ENCODE measurements at regions of chr13 and their contacts with region 1.

Region 1: GRCh38 chr13:40445557-40445990 is 220.9 kb downstream of the FOXO1 start:
- DNase-seq: peak in 1 of 2 experiments; percentile 67
- H3K4me3 ChIP-seq: no peak overlapping the region
- H3K27ac ChIP-seq: no peak overlapping the region
- H3K4me1 ChIP-seq: peaks cover 11% of the 10 kb centered on the region
- H3K27me3 ChIP-seq: no peaks in the 10 kb centered on the region
- CTCF ChIP-seq: no peak

Region 2: GRCh38 chr13:40271931-40272775 is 173.4 kb before region 1 on chr13:
- CTCF ChIA-PET with region 1: no interaction called
- POLR2A ChIA-PET with region 1: no interaction called
- intact Hi-C with region 1: loop called (anchors 2 kb)
- DNase-seq: peak; percentile 74 to 82
- H3K4me3 ChIP-seq: no peak overlapping the region
- H3K27ac ChIP-seq: peak overlapping the region; percentile 57
- H3K4me1 ChIP-seq: peaks cover 27% of the 10 kb centered on the region
- H3K27me3 ChIP-seq: no peaks in the 10 kb centered on the region
- CTCF ChIP-seq: no peak

Region 3: GRCh38 chr13:40344270-40345148 is 101.1 kb before region 1 on chr13:
- CTCF ChIA-PET with region 1: no interaction called
- POLR2A ChIA-PET with region 1: no interaction called
- intact Hi-C with region 1: loop called (anchors 5 kb)
- DNase-seq: no peak
- H3K4me3 ChIP-seq: no peak overlapping the region
- H3K27ac ChIP-seq: no peak overlapping the region
- H3K4me1 ChIP-seq: no peaks in the 10 kb centered on the region
- H3K27me3 ChIP-seq: no peaks in the 10 kb centered on the region
- CTCF ChIP-seq: no peak

Region 4: GRCh38 chr13:40401911-40402776 is 43.4 kb before region 1 on chr13:
- CTCF ChIA-PET with region 1: no interaction called
- POLR2A ChIA-PET with region 1: interaction called, 11 read pairs
- intact Hi-C with region 1: loop called (anchors 2 kb)
- DNase-seq: peak; percentile 88 to 91
- H3K4me3 ChIP-seq: peak overlapping the region; percentile 21; the same call in 1 of the 2 replicates
- H3K27ac ChIP-seq: peak overlapping the region; percentile 71
- H3K4me1 ChIP-seq: peaks cover 62% of the 10 kb centered on the region
- H3K27me3 ChIP-seq: no peaks in the 10 kb centered on the region
- CTCF ChIP-seq: no peak

Region 5: DNA sequence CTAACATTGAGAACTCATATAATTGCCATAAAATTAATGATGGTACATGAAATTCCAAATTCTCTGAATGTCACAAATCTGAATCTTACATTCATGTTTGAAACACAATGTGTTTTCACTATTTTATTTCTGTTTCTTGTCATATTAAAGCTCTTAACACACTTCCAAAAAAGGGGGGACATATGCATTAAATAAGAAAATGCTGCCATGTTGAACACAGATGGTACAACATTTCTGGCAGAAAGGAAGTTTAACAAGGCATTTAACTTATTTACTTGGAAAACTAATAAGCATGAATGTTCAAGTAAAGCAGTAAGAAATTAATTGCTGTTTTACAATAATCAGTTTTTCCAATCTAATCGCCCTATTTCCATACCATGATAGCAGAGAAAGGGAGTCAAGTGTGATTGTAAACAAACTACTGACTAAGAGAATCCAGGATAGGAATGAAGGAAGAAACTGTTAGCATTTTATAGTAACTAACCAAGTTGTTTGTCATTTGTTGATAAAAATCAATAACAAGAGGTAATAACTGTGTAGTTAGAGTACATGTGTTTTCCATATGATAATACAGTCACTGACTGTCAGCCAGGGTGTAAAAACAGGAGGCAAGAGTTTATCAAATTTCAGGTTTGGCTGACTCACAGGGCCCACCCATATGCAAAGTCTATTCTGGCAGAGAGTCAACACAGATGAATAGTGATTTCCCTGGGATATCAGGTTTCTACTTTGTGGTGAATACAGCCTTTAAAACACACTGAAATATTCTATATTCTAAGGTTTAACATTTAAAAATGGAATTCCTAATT is 226.6 kb after region 1 on chr13:
- CTCF ChIA-PET with region 1: no interaction called
- POLR2A ChIA-PET with region 1: interaction called, 4 read pairs
- intact Hi-C with region 1: loop called (anchors 2 kb)
- DNase-seq: peak; percentile 49 to 81
- H3K4me3 ChIP-seq: peak overlapping the region; percentile 19; the same call in 1 of the 2 replicates
- H3K27ac ChIP-seq: peak overlapping the region; percentile 82
- H3K4me1 ChIP-seq: peaks cover 31% of the 10 kb centered on the region
- H3K27me3 ChIP-seq: no peaks in the 10 kb centered on the region
- CTCF ChIP-seq: no peak